ENCODE measurements at regions of chr11 and their contacts with region 1.

Region 1: DNA sequence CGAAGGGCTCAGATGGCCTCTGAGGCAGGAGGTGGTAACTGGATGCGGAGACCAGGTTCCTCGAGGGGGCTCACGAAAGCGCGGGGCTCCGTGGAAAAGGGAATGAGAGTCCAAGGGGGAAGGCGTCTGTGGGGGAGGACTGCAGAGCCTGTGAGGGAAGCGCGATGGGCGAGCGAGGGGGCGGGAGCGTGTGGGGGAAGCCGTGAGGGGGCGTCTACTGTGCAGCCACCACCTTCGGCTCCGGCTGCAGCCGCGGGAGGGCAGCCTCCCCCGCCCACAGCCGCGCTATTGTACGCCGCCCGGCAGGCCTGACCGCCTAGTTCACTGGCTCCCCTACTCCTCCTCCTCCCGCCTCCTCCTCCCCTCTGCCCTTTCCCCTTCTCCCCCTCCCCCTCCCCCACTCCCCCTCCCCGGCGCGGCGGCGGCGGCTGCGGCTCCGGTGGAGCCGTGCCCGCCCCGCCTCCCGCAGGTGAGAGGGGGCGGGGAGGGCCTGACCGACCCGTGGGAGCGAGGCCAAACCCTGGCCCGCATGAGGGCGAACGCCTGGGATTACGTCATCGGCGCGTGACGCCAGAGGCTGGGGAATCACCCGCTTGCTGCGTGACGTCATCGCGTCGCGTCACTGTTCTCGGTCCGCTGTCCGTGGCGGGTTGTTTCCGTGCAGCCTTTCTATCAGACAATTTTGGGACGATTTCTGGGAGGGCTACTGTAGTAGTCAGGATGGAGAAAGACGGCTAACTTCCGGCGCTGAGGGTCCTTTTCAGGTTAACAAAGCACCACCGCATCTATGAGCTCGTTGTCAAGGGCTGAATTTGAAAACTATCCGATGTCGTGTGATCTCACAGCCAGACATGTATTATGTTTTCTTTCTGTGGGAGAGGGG is at the start of gene PAK1:
- DNase-seq: peak; percentile 83
- H3K4me3 Mint-ChIP-seq: peak within 1 kb of the TSS; percentile 79
- H3K27ac Mint-ChIP-seq: peak within 1 kb of the TSS; percentile 74
- H3K4me1 Mint-ChIP-seq: no peaks in the 10 kb centered on the region
- H3K27me3 Mint-ChIP-seq: no peaks in the 10 kb centered on the region
- CTCF ChIP-seq: no peak
- total RNA-seq, gene PAK1: 24.0 and 25.5 TPM in 2 replicates

Region 2: GRCh38 chr11:77187776-77188632 is 286.0 kb before region 1 on chr11:
- CTCF ChIA-PET with region 1: interaction called, 3 read pairs
- POLR2A ChIA-PET with region 1: no interaction called
- intact Hi-C with region 1: loop called (anchors 2 kb)
- DNase-seq: peak; percentile 83
- H3K4me3 Mint-ChIP-seq: no peak overlapping the region
- H3K27ac Mint-ChIP-seq: no peak overlapping the region
- H3K4me1 Mint-ChIP-seq: no peaks in the 10 kb centered on the region
- H3K27me3 Mint-ChIP-seq: peaks cover 12% of the 10 kb centered on the region
- CTCF ChIP-seq: peak; percentile 79

Region 3: GRCh38 chr11:77487790-77488189 is 13.7 kb after region 1 on chr11:
- CTCF ChIA-PET with region 1: no interaction called
- POLR2A ChIA-PET with region 1: interaction called, 10 read pairs
- intact Hi-C with region 1: no loop called
- DNase-seq: no peak
- H3K4me3 Mint-ChIP-seq: no peak overlapping the region
- H3K27ac Mint-ChIP-seq: no peak overlapping the region
- H3K4me1 Mint-ChIP-seq: no peaks in the 10 kb centered on the region
- H3K27me3 Mint-ChIP-seq: no peaks in the 10 kb centered on the region
- CTCF ChIP-seq: no peak

Measured in MCF 10A (cell line).